Naive thymus-derived CD4-positive, alpha-beta T cell (primary cell): ENCODE measurements at regions of chr10 and their contacts with region 1.

Region 1: GRCh38 chr10:119725828-119726675 is at the start of gene INPP5F:
- DNase-seq: peak; percentile 95 to 100 (median 96)
- ATAC-seq: peak; percentile 98
- H3K4me3 ChIP-seq: peak within 1 kb of the TSS; percentile 78
- H3K4me3 Mint-ChIP-seq: peak within 1 kb of the TSS; percentile 89 to 95 (median 94)
- H3K27ac ChIP-seq: peak within 1 kb of the TSS; percentile 76
- H3K27ac Mint-ChIP-seq: peak within 1 kb of the TSS; percentile 71 to 92 (median 87)
- H3K4me1 ChIP-seq: peaks cover 11 to 24% of the 10 kb centered on the region in 2 donors
- H3K4me1 Mint-ChIP-seq: peaks cover 25 to 53% (median 38%) of the 10 kb centered on the region in 7 donors
- H3K27me3 ChIP-seq: no peaks in the 10 kb centered on the region
- H3K27me3 Mint-ChIP-seq: no peaks in the 10 kb centered on the region
- total RNA-seq, gene INPP5F: 8.5 to 12.1 (median 10.0) TPM

Region 2: GRCh38 chr10:119080521-119081260 is 645.4 kb before region 1 on chr10 and contains the start of gene EIF3A:
- CTCF ChIA-PET with region 1: no interaction called
- POLR2A ChIA-PET with region 1: interaction called, 4 read pairs
- intact Hi-C with region 1: loop called in 1 of 2 experiments (anchors 5 kb)
- DNase-seq: peak; percentile 87 to 98 (median 93)
- ATAC-seq: peak; percentile 90
- H3K4me3 ChIP-seq: peak within 1 kb of the TSS; percentile 83
- H3K4me3 Mint-ChIP-seq: peak within 1 kb of the TSS; percentile 86 to 99 (median 98)
- H3K27ac ChIP-seq: peak within 1 kb of the TSS; percentile 91
- H3K27ac Mint-ChIP-seq: peak within 1 kb of the TSS; percentile 93 to 100 (median 98)
- H3K4me1 ChIP-seq: peaks cover 6 to 26% of the 10 kb centered on the region in 2 donors
- H3K4me1 Mint-ChIP-seq: peaks cover 28 to 55% (median 45%) of the 10 kb centered on the region in 7 donors
- H3K27me3 ChIP-seq: no peaks in the 10 kb centered on the region
- H3K27me3 Mint-ChIP-seq: peaks cover 0 to 2% (median 0%) of the 10 kb centered on the region in 5 donors
- total RNA-seq, gene EIF3A: 87.8 to 137 (median 96.0) TPM

Region 3: GRCh38 chr10:119502209-119502608 is 223.8 kb before region 1 on chr10:
- CTCF ChIA-PET with region 1: no interaction called
- POLR2A ChIA-PET with region 1: no interaction called
- intact Hi-C with region 1: loop called in 1 of 2 experiments (anchors 2 kb)
- DNase-seq: peak; percentile 50 to 93 (median 91)
- ATAC-seq: peak; percentile 91
- H3K4me3 ChIP-seq: peak overlapping the region; percentile 46
- H3K4me3 Mint-ChIP-seq: peak overlapping the region; percentile 70 to 85 (median 82)
- H3K27ac ChIP-seq: peak overlapping the region; percentile 98
- H3K27ac Mint-ChIP-seq: peak overlapping the region; percentile 95 to 100 (median 99)
- H3K4me1 ChIP-seq: peaks cover 39 to 88% of the 10 kb centered on the region in 2 donors
- H3K4me1 Mint-ChIP-seq: peaks cover 56 to 98% (median 92%) of the 10 kb centered on the region in 7 donors
- H3K27me3 ChIP-seq: no peaks in the 10 kb centered on the region
- H3K27me3 Mint-ChIP-seq: no peaks in the 10 kb centered on the region

Region 4: DNA sequence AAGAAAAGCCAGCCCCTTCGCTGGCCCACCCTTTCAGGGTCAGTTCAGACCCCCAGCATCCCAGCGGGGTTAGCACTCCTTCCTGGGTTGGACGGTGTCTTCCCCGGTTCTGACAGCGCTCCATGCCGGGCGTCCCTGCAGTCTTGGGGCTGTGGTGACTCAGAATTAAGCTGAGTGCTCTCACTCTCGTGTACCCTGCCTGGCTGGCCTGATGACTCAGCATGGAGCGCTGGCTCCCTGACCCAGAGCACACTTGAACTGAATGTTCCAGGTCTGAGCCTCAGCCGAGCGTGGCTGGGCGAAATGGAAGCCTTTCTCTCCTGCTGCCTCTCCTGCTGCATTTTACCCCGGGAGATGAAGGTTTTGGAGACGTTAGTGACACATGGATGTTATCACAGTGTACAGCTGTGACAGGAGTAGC is 67.8 kb before region 1 on chr10:
- CTCF ChIA-PET with region 1: no interaction called
- POLR2A ChIA-PET with region 1: interaction called, 10 read pairs
- intact Hi-C with region 1: loop called in 1 of 2 experiments (anchors 1 kb)
- DNase-seq: no peak
- ATAC-seq: no peak
- H3K4me3 ChIP-seq: no peak overlapping the region
- H3K4me3 Mint-ChIP-seq: peak overlapping the region in 3 of 10 donors; percentile 32 to 59 (median 37)
- H3K27ac ChIP-seq: no peak overlapping the region
- H3K27ac Mint-ChIP-seq: peak overlapping the region in 5 of 9 donors; percentile 22 to 91 (median 36)
- H3K4me1 ChIP-seq: peaks cover 22 to 48% of the 10 kb centered on the region in 2 donors
- H3K4me1 Mint-ChIP-seq: peaks cover 44 to 94% (median 87%) of the 10 kb centered on the region in 7 donors
- H3K27me3 ChIP-seq: no peaks in the 10 kb centered on the region
- H3K27me3 Mint-ChIP-seq: no peaks in the 10 kb centered on the region

Region 5: DNA sequence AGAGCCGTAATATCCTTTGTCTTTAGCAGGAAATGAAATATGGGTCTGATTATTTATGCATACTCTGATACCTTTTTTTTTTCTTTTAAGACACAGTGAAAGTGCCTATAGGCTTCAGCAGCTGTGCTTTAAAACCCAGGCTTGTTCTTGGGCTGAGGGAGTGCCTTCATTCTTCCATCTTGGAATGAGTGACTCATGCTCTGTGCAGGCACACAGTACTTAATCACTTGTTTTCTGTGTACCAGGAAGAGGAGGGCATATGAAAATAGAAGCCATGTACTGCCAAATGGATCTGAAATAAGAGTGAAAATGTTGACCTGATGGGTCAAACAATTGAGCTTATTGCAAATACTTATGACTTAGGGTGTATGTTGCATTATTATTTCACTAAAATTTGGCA is 11.8 kb after region 1 on chr10:
- CTCF ChIA-PET with region 1: interaction called, 13 read pairs
- POLR2A ChIA-PET with region 1: interaction called, 10 read pairs
- intact Hi-C with region 1: loop called in 1 of 2 experiments (anchors 1 kb)
- DNase-seq: peak in 1 of 9 donors; percentile 13
- ATAC-seq: peak; percentile 36
- H3K4me3 ChIP-seq: no peak overlapping the region
- H3K4me3 Mint-ChIP-seq: peak overlapping the region in 8 of 10 donors; percentile 10 to 56 (median 40)
- H3K27ac ChIP-seq: no peak overlapping the region
- H3K27ac Mint-ChIP-seq: peak overlapping the region in 5 of 9 donors; percentile 37 to 80 (median 67)
- H3K4me1 ChIP-seq: peaks cover 6 to 15% of the 10 kb centered on the region in 2 donors
- H3K4me1 Mint-ChIP-seq: peaks cover 16 to 60% (median 32%) of the 10 kb centered on the region in 7 donors
- H3K27me3 ChIP-seq: no peaks in the 10 kb centered on the region
- H3K27me3 Mint-ChIP-seq: no peaks in the 10 kb centered on the region